ENCODE measurements at regions of chr19 and their contacts with region 1.

Region 1: GRCh38 chr19:4791170-4792018 is at the start of gene FEM1A:
- DNase-seq: peak; percentile 100
- ATAC-seq: peak; percentile 94
- H3K4me3 ChIP-seq: peak within 1 kb of the TSS; percentile 48 to 79 (median 76)
- H3K4me3 Mint-ChIP-seq: peak within 1 kb of the TSS; percentile 84
- H3K27ac ChIP-seq: peak within 1 kb of the TSS; percentile 67 to 93
- H3K27ac Mint-ChIP-seq: peak within 1 kb of the TSS; percentile 89
- H3K4me1 ChIP-seq: peaks cover 8 to 22% of the 10 kb centered on the region in 2 donors
- H3K4me1 Mint-ChIP-seq: peaks cover 30% of the 10 kb centered on the region
- H3K27me3 ChIP-seq: no peaks in the 10 kb centered on the region
- H3K27me3 Mint-ChIP-seq: no peaks in the 10 kb centered on the region
- CTCF ChIP-seq: peak; percentile 98
- total RNA-seq, gene FEM1A: 18.2 and 18.7 TPM in 2 replicates

Region 2: DNA sequence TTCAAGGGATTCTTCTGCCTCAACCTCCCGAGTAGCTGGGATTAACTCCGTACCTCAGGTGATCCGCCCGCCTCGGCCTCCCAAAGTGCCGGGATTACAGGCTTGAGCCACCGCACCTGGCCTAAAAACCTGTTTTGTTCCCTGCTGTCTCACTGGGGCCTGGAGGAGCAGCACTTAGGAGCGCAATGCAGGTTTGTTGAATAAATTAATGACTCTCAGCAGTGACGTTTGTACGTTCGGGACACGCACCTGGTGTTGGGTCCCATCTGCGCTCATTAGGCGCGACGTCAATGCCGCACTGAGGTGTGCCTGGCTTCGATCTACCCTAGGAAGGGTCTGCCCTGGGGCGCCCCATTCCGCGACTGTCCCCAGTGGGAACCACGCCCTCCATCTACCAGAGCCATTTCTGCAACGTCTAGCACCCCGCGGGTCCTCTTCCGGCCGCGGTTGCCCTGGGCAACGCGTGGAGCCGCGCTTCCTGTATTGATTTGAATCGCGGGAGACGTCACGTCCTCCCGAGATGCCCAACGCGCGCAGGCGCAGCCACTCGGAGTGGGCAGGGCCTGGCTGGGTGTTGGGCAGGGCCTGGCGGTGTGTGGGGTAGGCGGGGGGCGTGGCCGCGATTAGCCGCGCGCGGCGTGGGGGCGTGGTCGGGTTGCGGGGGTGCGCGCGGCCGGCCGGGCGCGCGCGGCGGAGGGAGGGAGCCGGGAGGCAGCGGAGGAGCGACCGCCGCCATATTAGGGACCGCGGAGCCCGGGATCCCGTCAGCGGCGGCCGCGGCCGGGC is 1285.6 kb before region 1 on chr19 and contains the start of gene FZR1:
- CTCF ChIA-PET with region 1: no interaction called
- POLR2A ChIA-PET with region 1: no interaction called
- intact Hi-C with region 1: loop called (anchors 5 kb)
- DNase-seq: peak; percentile 100
- ATAC-seq: peak; percentile 91
- H3K4me3 ChIP-seq: peak within 1 kb of the TSS; percentile 74 to 95 (median 77)
- H3K4me3 Mint-ChIP-seq: peak within 1 kb of the TSS; percentile 92
- H3K27ac ChIP-seq: peak within 1 kb of the TSS; percentile 92 to 94
- H3K27ac Mint-ChIP-seq: peak within 1 kb of the TSS; percentile 99
- H3K4me1 ChIP-seq: peaks cover 12 to 21% of the 10 kb centered on the region in 2 donors
- H3K4me1 Mint-ChIP-seq: peaks cover 49% of the 10 kb centered on the region
- H3K27me3 ChIP-seq: no peaks in the 10 kb centered on the region
- H3K27me3 Mint-ChIP-seq: no peaks in the 10 kb centered on the region
- CTCF ChIP-seq: no peak
- total RNA-seq, gene FZR1: 96.1 and 105 TPM in 2 replicates

Region 3: DNA sequence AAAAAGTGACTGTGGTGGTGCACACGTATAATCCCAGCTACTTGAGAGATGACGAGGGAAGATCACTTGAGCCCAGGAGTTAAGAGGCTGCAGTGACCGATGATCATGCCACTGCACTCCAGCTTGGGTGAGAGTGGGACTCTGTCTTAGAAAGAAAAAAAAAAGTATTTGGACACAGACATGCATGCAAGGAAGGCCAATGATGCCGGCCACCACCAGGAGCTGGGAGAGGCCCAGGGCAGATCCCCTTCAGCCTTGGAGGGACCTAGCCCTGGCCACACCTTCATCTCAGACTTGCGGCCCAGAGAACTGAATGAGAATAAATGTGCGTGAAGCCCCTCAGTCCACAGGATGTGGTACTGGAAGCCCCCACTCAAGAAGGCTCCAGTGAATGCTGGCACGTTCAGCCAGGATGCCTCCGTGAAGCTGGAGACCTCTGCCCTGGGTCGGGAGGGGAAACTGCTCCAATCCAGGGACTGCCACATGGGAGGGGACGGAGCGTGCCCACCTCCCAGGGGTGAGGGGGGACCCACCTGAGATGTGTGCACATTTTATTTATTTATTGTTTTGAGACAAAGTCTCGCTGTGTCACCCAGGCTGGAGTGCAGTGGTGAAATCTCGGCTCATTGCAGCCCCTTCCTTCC is 137.5 kb before region 1 on chr19:
- CTCF ChIA-PET with region 1: no interaction called
- POLR2A ChIA-PET with region 1: interaction called, 12 read pairs
- intact Hi-C with region 1: no loop called
- DNase-seq: no peak
- ATAC-seq: no peak
- H3K4me3 ChIP-seq: no peak overlapping the region
- H3K4me3 Mint-ChIP-seq: no peak overlapping the region
- H3K27ac ChIP-seq: no peak overlapping the region
- H3K27ac Mint-ChIP-seq: no peak overlapping the region
- H3K4me1 ChIP-seq: no peaks in the 10 kb centered on the region
- H3K4me1 Mint-ChIP-seq: peaks cover 9% of the 10 kb centered on the region
- H3K27me3 ChIP-seq: no peaks in the 10 kb centered on the region
- H3K27me3 Mint-ChIP-seq: no peaks in the 10 kb centered on the region
- CTCF ChIP-seq: no peak

Region 4: DNA sequence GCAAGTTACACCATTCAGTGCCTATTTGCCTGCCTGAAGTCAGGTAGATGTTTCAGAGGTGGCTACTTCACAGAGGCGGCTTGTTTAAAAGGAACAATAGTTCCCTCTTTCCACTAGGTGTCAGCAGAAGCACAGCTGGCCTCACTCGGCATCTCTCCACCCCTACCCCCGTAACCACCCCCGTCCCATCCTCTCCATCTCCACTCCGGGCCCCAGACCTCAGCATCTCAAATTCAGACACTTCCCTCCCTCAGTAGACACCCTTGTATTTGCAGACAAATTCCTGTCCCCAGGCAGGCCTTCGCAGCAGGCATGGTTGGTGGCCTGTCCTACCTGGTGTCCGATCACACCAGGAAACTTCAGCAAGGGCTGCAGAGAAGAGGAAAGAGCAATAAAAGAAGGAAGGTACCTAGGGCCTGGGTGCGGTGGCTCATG is 58.7 kb before region 1 on chr19:
- CTCF ChIA-PET with region 1: interaction called, 102 read pairs
- POLR2A ChIA-PET with region 1: interaction called, 3 read pairs
- intact Hi-C with region 1: loop called (anchors 1 kb)
- DNase-seq: peak; percentile 80
- ATAC-seq: peak; percentile 97
- H3K4me3 ChIP-seq: peak overlapping the region in 1 of 5 experiments; percentile 30
- H3K4me3 Mint-ChIP-seq: peak overlapping the region; percentile 54
- H3K27ac ChIP-seq: no peak overlapping the region
- H3K27ac Mint-ChIP-seq: no peak overlapping the region
- H3K4me1 ChIP-seq: peaks cover 3 to 6% of the 10 kb centered on the region in 2 donors
- H3K4me1 Mint-ChIP-seq: peaks cover 5% of the 10 kb centered on the region
- H3K27me3 ChIP-seq: peaks cover 0 to 5% (median 1%) of the 10 kb centered on the region in 4 experiments
- H3K27me3 Mint-ChIP-seq: peaks cover 7% of the 10 kb centered on the region
- CTCF ChIP-seq: peak; percentile 78

Region 5: GRCh38 chr19:4803736-4804695 is 12.6 kb after region 1 on chr19:
- CTCF ChIA-PET with region 1: interaction called, 23 read pairs
- POLR2A ChIA-PET with region 1: no interaction called
- intact Hi-C with region 1: no loop called
- DNase-seq: peak; percentile 80
- ATAC-seq: peak; percentile 94
- H3K4me3 ChIP-seq: no peak overlapping the region
- H3K4me3 Mint-ChIP-seq: no peak overlapping the region
- H3K27ac ChIP-seq: no peak overlapping the region
- H3K27ac Mint-ChIP-seq: no peak overlapping the region
- H3K4me1 ChIP-seq: peaks cover 4 to 11% of the 10 kb centered on the region in 2 donors
- H3K4me1 Mint-ChIP-seq: peaks cover 15% of the 10 kb centered on the region
- H3K27me3 ChIP-seq: no peaks in the 10 kb centered on the region
- H3K27me3 Mint-ChIP-seq: no peaks in the 10 kb centered on the region
- CTCF ChIP-seq: peak; percentile 82

Measured in B cell (primary cell).